GM12878 (cell line): ENCODE measurements at regions of chr9 and their contacts with region 1.

Region 1: DNA sequence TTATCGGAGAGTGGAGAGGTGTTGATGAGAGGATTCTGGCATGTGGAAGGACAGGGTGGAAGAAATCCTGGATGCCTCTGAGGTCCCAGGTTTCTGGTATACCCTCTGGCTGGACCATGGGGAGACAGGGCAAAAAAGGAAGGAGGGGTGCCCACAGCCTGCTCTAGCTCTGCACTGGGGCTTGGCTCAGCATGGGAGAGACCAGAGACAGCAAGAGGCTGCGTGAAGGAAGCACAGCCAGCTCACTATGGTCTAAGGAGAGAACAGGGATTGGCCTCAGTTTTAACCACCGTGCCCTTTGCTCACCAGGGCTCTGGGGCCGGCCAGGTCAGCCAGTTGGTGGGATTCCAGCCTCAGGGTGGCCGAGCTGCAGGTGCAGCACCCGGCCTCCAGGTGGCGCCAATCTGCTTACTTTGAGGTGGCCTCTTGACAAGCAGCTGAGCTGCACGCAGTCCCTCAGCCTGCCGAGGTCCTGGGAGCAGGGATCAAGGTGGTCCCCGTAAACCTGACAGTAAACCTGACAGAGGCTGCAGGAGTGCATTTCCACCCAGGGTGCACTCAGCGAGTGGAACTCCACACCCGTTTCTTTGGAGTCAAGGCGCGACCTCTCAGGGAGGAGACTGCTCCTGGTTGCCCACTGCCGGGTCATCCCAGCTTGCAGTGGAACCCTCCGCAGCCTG is 25.0 kb upstream of the SPTLC1 start:
- DNase-seq: no peak
- ATAC-seq: peak; percentile 84
- H3K4me3 ChIP-seq: no peak overlapping the region
- H3K27ac ChIP-seq: no peak overlapping the region
- H3K4me1 ChIP-seq: no peaks in the 10 kb centered on the region; the same call in 1 of the 2 replicates
- H3K27me3 ChIP-seq: peaks cover 0 to 4% of the 10 kb centered on the region in 2 experiments; a peak in 3 of 4 replicates
- CTCF ChIP-seq: peak; percentile 92 to 98 (median 94)
- EP300 ChIP-seq: no peak
- POLR2A ChIP-seq: no peak
- RAD21 ChIP-seq: peak; percentile 82

Region 2: DNA sequence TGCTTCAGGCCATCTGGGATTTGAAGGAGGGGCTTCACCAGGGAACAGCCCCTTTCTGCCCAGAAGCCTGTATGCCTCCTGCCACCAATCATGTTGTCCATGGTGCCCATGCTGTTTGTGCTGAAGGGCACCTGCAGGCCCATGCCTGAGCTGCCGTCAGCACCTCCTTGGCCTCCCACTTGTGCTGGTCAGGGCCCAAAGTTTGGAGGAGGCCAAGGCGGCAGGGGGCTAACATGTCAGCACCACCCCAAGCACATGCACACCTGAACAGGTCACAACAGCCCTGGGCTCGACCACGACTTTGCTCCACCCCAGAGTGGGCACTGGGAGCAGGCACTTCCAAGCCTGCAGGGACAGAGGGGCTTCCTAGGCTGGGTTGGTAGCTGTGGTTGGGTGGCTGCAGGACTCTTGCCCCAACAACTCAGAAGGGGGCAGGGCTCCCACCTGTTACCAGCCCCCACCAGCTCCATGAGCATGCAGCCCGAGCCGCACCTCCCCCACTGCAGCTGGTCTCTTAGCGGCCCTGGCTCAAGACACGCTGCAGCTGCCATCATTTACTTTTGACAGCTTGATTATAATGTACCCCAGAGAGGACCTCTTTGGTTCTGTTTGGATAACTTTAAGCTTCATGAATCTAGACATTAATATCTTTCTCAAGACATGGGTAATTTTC is 696.8 kb before region 1 on chr9:
- CTCF ChIA-PET with region 1: no interaction called
- POLR2A ChIA-PET with region 1: no interaction called
- RAD21 ChIA-PET with region 1: no interaction called
- SMC1A ChIA-PET with region 1: no interaction called
- in situ Hi-C with region 1: no loop called
- intact Hi-C with region 1: no loop called
- DNase-seq: no peak
- ATAC-seq: no peak
- H3K4me3 ChIP-seq: no peak overlapping the region
- H3K27ac ChIP-seq: no peak overlapping the region
- H3K4me1 ChIP-seq: no peaks in the 10 kb centered on the region
- H3K27me3 ChIP-seq: no peaks in the 10 kb centered on the region
- CTCF ChIP-seq: no peak
- EP300 ChIP-seq: no peak
- POLR2A ChIP-seq: no peak
- RAD21 ChIP-seq: no peak

Region 3: GRCh38 chr9:92001244-92001643 is 139.0 kb before region 1 on chr9:
- CTCF ChIA-PET with region 1: no interaction called
- POLR2A ChIA-PET with region 1: no interaction called
- RAD21 ChIA-PET with region 1: no interaction called
- SMC1A ChIA-PET with region 1: no interaction called
- in situ Hi-C with region 1: no loop called
- intact Hi-C with region 1: no loop called
- DNase-seq: no peak
- ATAC-seq: no peak
- H3K4me3 ChIP-seq: no peak overlapping the region
- H3K27ac ChIP-seq: no peak overlapping the region
- H3K4me1 ChIP-seq: no peaks in the 10 kb centered on the region
- H3K27me3 ChIP-seq: no peaks in the 10 kb centered on the region; a peak in 1 of 4 replicates
- CTCF ChIP-seq: no peak
- EP300 ChIP-seq: no peak
- POLR2A ChIP-seq: no peak
- RAD21 ChIP-seq: no peak

Region 4: GRCh38 chr9:92155221-92155620 is 15.0 kb after region 1 on chr9:
- CTCF ChIA-PET with region 1: interaction called, 51 read pairs
- POLR2A ChIA-PET with region 1: no interaction called
- RAD21 ChIA-PET with region 1: interaction called, 4 read pairs
- SMC1A ChIA-PET with region 1: interaction called, 22 read pairs
- in situ Hi-C with region 1: no loop called
- intact Hi-C with region 1: no loop called
- DNase-seq: no peak
- ATAC-seq: no peak
- H3K4me3 ChIP-seq: no peak overlapping the region
- H3K27ac ChIP-seq: no peak overlapping the region
- H3K4me1 ChIP-seq: no peaks in the 10 kb centered on the region
- H3K27me3 ChIP-seq: no peaks in the 10 kb centered on the region; a peak in 1 of 4 replicates
- CTCF ChIP-seq: no peak
- EP300 ChIP-seq: no peak
- POLR2A ChIP-seq: no peak
- RAD21 ChIP-seq: no peak

Region 5: DNA sequence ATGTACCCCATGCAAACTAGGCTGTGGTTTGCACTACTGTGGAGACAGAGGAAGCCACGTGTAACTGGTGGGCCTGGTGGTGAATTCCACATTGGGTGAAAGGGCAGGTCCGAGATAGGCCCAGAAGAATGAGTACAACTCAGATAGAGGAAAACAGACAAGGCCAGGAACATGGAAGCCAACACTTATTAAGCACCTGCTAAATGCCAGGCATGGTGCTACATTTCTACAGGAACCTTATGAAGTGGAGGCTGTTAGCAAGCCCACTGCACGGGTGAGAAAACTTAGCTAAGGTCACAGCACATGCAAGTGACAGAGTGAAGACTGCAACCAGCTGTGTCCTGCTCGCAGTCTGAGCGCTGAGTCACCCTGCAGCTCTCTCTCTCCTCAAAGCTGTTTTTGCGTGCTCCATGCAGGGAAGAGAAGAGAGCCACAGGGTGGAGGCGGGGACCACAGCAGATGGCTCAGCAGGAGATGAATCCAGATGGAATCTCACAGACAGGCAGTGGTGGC is 40.5 kb after region 1 on chr9:
- CTCF ChIA-PET with region 1: interaction called, 11 read pairs
- POLR2A ChIA-PET with region 1: no interaction called
- RAD21 ChIA-PET with region 1: interaction called, 4 read pairs
- SMC1A ChIA-PET with region 1: interaction called, 7 read pairs
- in situ Hi-C with region 1: no loop called
- intact Hi-C with region 1: no loop called
- DNase-seq: no peak
- ATAC-seq: peak; percentile 26; the same call in 2 of the 3 replicates
- H3K4me3 ChIP-seq: no peak overlapping the region
- H3K27ac ChIP-seq: no peak overlapping the region
- H3K4me1 ChIP-seq: peaks cover 14% of the 10 kb centered on the region
- H3K27me3 ChIP-seq: no peaks in the 10 kb centered on the region
- CTCF ChIP-seq: no peak
- EP300 ChIP-seq: no peak
- POLR2A ChIP-seq: no peak
- RAD21 ChIP-seq: no peak

Region 6: DNA sequence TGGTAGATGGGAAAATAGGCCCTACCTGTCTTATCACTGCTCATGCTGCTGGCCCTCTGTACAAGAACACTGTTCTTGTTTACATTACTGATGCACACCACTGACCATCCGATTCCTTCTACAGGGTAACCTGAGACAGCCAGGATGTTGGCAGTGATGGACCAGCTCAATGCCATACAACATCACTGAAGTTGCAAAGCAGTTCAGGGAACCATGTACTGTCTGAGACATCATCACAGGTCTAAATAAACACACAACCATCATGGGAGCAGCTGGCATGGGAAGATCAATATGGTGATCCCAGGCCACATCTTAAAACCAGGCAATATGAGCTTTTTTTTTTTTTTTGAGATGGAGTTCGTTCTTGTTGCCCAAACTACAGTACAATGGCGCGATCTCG is 94.3 kb after region 1 on chr9:
- CTCF ChIA-PET with region 1: interaction called, 38 read pairs
- POLR2A ChIA-PET with region 1: no interaction called
- RAD21 ChIA-PET with region 1: interaction called, 7 read pairs
- SMC1A ChIA-PET with region 1: interaction called, 9 read pairs
- in situ Hi-C with region 1: no loop called
- intact Hi-C with region 1: no loop called
- DNase-seq: no peak
- ATAC-seq: no peak
- H3K4me3 ChIP-seq: no peak overlapping the region
- H3K27ac ChIP-seq: no peak overlapping the region
- H3K4me1 ChIP-seq: no peaks in the 10 kb centered on the region
- H3K27me3 ChIP-seq: no peaks in the 10 kb centered on the region
- CTCF ChIP-seq: no peak
- EP300 ChIP-seq: no peak
- POLR2A ChIP-seq: no peak; the same call in 1 of the 2 replicates
- RAD21 ChIP-seq: no peak

Region 7: DNA sequence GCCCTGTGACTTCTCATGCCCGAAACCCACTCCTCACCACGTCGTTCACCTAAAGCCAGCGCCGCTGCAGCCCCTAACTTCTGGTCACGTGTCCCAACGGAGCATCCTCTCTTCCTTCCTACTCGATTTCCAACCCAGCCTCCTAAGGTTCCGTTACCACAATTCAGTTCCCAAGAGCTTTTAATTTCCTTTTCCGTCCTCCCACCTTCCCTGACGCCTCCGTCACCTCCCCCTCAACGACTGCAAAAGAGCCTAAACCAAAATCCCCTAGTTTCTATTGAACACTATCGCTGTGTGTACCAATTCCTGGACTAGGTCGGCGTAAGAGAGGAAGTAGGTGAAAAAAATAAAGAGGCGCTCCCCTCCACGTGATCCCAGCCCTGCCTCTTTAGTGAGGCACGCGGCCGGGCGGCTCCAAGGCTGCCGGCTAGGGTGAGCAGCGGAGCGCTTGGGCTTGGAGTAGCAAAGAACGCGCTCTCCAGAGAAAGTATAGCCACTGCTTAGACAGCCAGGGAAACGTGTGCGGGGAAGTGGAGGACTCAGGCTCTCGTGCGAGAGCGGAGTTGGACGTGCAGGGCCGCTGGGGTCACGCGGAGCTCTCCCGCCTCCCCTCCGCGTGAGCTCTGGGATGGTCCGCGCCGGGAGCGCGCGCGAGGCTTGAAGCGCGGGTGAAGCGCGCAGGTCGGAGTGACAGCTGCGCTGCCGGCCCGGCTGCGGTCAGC is 185.2 kb after region 1 on chr9 and contains the starts of genes CENPP and NOL8:
- CTCF ChIA-PET with region 1: interaction called, 24 read pairs
- POLR2A ChIA-PET with region 1: no interaction called
- RAD21 ChIA-PET with region 1: interaction called, 10 read pairs
- SMC1A ChIA-PET with region 1: interaction called, 7 read pairs
- in situ Hi-C with region 1: no loop called
- intact Hi-C with region 1: no loop called
- DNase-seq: peak; percentile 80
- ATAC-seq: peak; percentile 95
- H3K4me3 ChIP-seq: peak within 1 kb of the TSS; percentile 96
- H3K27ac ChIP-seq: peak within 1 kb of the TSS; percentile 98
- H3K4me1 ChIP-seq: peaks cover 2% of the 10 kb centered on the region; the same call in 1 of the 2 replicates
- H3K27me3 ChIP-seq: no peaks in the 10 kb centered on the region
- CTCF ChIP-seq: no peak
- EP300 ChIP-seq: no peak; a peak in 1 of 4 replicates
- POLR2A ChIP-seq: peak; percentile 88
- RAD21 ChIP-seq: no peak
- polyA plus RNA-seq, gene CENPP: 9.4 to 11.7 TPM
- polyA plus RNA-seq, gene NOL8: 55.9 to 58.6 TPM

Region 8: DNA sequence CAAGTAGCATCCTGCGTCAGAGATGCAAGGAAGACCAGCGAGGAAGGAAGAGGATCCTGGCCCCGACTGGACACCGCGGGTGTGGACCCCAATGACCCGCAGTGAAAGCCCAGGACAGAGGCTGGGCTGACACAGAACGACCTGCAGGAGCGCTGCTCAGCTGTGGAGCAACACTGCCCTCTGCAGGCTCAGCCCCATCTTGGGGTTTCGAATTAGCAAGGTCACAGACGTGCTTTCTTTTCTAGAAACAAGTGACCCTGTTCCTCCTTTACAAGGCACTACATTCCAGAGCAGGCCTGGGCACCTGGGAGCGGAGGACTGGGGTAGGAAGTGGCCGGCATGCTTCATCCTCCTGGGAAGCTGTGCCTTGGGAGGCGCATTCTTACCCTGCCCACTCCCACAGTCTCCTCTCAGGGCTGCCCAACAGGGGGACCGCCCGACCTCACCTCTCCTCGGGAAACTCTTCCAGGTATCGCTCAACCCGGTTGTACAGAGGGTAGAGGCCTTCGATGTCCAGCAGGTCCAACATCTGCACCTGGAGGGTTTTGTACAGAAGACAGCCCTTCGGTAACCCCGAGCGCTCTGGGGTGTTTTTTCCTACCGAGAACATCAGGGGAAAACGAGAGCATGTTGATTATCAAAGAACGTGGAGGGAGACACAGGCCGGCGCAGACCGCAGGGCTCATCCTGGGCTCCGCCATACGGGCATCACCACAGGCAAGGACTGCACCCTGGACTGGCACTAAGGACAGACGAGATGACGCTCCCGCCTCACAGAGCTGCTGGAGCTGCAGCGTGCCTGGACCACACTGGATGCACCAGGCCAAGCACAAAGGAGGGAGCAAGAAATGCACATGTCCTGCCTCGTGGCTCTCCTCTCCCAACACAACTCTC is 494.7 kb after region 1 on chr9:
- CTCF ChIA-PET with region 1: interaction called, 44 read pairs
- POLR2A ChIA-PET with region 1: interaction called, 3 read pairs
- RAD21 ChIA-PET with region 1: interaction called, 10 read pairs
- SMC1A ChIA-PET with region 1: interaction called, 18 read pairs
- in situ Hi-C with region 1: loop called (anchors 5 kb)
- intact Hi-C with region 1: loop called (anchors 2 kb)
- DNase-seq: peak; percentile 15
- ATAC-seq: peak; percentile 98
- H3K4me3 ChIP-seq: no peak overlapping the region
- H3K27ac ChIP-seq: no peak overlapping the region
- H3K4me1 ChIP-seq: peaks cover 4% of the 10 kb centered on the region
- H3K27me3 ChIP-seq: no peaks in the 10 kb centered on the region
- CTCF ChIP-seq: peak; percentile 93 to 96 (median 95)
- EP300 ChIP-seq: no peak
- POLR2A ChIP-seq: no peak
- RAD21 ChIP-seq: peak; percentile 87